Heart left ventricle (tissue), 16 donors: ENCODE measurements at regions of chr15 and their contacts with region 1.

Region 1: GRCh38 chr15:91302588-91303439 is 202.8 kb downstream of the SV2B start:
- DNase-seq: peak in 4 of 5 donors; percentile 32 to 50 (median 38)
- ATAC-seq: peak; percentile 67 to 89 (median 82)
- H3K4me3 ChIP-seq: no peak overlapping the region
- H3K27ac ChIP-seq: no peak overlapping the region
- H3K4me1 ChIP-seq: peaks cover 0 to 27% (median 9%) of the 10 kb centered on the region in 12 donors
- H3K27me3 ChIP-seq: peaks cover 0 to 9% (median 0%) of the 10 kb centered on the region in 9 donors
- CTCF ChIP-seq: peak; percentile 64 to 84 (median 74)
- POLR2A ChIP-seq: no peak

Region 2: GRCh38 chr15:91529534-91529933 is 226.7 kb after region 1 on chr15:
- intact Hi-C with region 1: loop called in 2 of 10 experiments (anchors 5 kb)
- DNase-seq: no peak
- ATAC-seq: no peak
- H3K4me3 ChIP-seq: no peak overlapping the region
- H3K27ac ChIP-seq: no peak overlapping the region
- H3K4me1 ChIP-seq: peaks cover 0 to 16% (median 0%) of the 10 kb centered on the region in 12 donors
- H3K27me3 ChIP-seq: no peaks in the 10 kb centered on the region
- CTCF ChIP-seq: no peak
- POLR2A ChIP-seq: no peak

Region 3: GRCh38 chr15:91689377-91689776 is 386.6 kb after region 1 on chr15:
- intact Hi-C with region 1: loop called in 1 of 10 experiments (anchors 5 kb)
- DNase-seq: no peak
- ATAC-seq: peak in 2 of 4 donors; percentile 42 to 59
- H3K4me3 ChIP-seq: no peak overlapping the region
- H3K27ac ChIP-seq: no peak overlapping the region
- H3K4me1 ChIP-seq: peaks cover 0 to 10% (median 0%) of the 10 kb centered on the region in 12 donors
- H3K27me3 ChIP-seq: peaks cover 0 to 3% (median 0%) of the 10 kb centered on the region in 9 donors
- CTCF ChIP-seq: no peak
- POLR2A ChIP-seq: no peak

Region 4: GRCh38 chr15:92077353-92078085 is 774.7 kb after region 1 on chr15:
- intact Hi-C with region 1: loop called (anchors 2 to 5 kb)
- DNase-seq: peak; percentile 72 to 83 (median 81)
- ATAC-seq: peak; percentile 63 to 82 (median 80)
- H3K4me3 ChIP-seq: no peak overlapping the region
- H3K27ac ChIP-seq: peak overlapping the region in 1 of 12 donors; percentile 10
- H3K4me1 ChIP-seq: peaks cover 8 to 71% (median 57%) of the 10 kb centered on the region in 12 donors
- H3K27me3 ChIP-seq: no peaks in the 10 kb centered on the region
- CTCF ChIP-seq: peak; percentile 61 to 89 (median 82)
- POLR2A ChIP-seq: no peak

Region 5: DNA sequence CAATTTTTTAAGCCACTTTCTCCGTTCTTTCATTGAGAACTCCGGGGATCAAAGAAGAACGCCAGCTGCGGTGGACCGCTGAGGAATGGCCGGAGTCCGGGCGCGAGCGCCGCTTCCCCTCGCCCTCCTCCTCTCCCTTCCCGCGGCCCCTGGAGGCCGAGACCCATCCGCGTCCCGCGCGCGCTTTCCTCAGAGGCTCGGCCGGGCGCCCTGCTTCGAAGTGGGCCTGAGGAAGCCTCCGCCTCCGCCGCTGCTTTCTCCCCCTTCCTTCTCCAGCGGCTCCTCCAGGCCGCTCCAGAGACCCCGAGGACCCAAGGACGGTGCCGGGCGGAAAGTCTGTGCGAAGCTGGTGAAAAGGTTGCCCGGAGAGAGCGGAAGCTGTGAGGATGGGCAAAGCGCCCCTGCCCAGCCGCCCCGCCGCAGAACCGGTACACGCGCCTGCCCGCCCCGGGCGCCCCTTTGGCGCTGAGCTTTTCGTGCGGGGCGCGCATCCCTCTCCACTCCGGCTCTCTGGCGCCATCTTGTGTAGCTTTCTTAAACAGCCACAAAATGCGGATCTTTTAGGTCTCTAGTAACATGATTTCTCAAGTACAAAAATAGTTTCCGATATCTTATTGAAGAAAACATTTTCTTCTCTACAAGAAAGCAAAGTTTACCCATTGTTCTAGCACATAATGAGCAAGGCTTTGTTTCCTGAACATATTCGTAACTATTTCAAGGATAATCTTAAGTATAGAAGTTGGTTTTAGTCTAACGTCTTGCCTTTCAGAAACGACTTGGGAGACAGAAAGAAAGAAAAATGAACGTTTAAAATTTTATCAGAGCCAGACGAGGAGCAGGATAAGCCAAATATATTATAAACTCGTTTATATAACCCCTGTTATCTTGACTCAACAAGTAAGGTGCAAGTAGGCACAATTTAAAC is 1411.9 kb after region 1 on chr15:
- intact Hi-C with region 1: loop called in 1 of 10 experiments (anchors 10 kb)
- DNase-seq: peak; percentile 69 to 78 (median 75)
- ATAC-seq: peak; percentile 73 to 92 (median 88)
- H3K4me3 ChIP-seq: peak overlapping the region; percentile 33 to 74 (median 62)
- H3K27ac ChIP-seq: peak overlapping the region; percentile 17 to 86 (median 59)
- H3K4me1 ChIP-seq: peaks cover 0 to 9% (median 4%) of the 10 kb centered on the region in 12 donors
- H3K27me3 ChIP-seq: peaks cover 0 to 5% (median 0%) of the 10 kb centered on the region in 9 donors
- CTCF ChIP-seq: peak; percentile 78 to 97 (median 90)
- POLR2A ChIP-seq: no peak